ENCODE measurements at regions of chr21 and their contacts with region 1.

Region 1: DNA sequence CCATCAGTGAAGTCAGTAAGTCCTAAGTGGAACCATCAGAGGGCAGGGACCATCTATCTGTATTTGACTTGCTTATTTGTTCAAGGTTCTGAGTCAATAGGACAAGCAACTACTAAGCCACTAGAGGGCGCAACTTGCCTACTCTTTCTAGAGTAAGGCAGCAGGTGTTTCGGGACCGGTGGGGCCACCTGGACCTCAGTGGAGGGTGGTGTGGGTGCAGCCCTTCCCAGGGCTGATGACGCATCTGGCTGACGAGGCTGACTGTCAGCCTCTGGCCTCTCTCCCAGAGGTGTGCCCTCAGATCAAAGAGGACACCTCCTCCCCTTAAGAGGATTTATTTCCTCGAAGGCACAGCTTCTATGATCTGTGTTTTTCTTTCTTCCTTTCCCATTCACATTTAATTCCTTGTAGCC is 6.6 kb downstream of the CBR3 start:
- DNase-seq: peak; percentile 95
- H3K4me3 Mint-ChIP-seq: no peak overlapping the region
- H3K27ac Mint-ChIP-seq: peak overlapping the region; percentile 0
- H3K4me1 Mint-ChIP-seq: peaks cover 20% of the 10 kb centered on the region
- H3K27me3 Mint-ChIP-seq: no peaks in the 10 kb centered on the region

Region 2: DNA sequence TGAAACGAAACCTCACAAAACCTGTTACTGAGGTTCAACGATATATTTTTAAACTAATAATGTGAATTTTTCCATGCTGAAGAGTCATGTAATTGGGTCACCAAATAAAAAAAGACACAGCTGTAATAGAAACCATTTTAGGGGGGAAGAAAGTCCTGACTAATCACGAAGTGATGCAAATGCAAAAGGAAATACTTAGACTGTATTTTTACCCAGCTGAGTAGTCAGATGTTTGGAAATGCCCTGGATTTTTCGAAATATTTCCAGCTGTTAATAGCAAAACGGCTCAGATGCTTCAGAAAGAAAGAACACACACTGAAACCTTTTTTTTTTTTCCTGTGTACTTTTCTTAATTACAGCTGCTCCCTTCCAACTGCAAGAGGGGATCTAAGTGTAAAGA is 291.5 kb before region 1 on chr21:
- CTCF ChIA-PET with region 1: no interaction called
- intact Hi-C with region 1: no loop called
- DNase-seq: no peak
- H3K4me3 Mint-ChIP-seq: no peak overlapping the region
- H3K27ac Mint-ChIP-seq: no peak overlapping the region
- H3K4me1 Mint-ChIP-seq: no peaks in the 10 kb centered on the region
- H3K27me3 Mint-ChIP-seq: peaks cover 5% of the 10 kb centered on the region

Region 3: GRCh38 chr21:35909456-35910223 is 231.9 kb before region 1 on chr21:
- CTCF ChIA-PET with region 1: no interaction called
- intact Hi-C with region 1: no loop called
- DNase-seq: no peak
- H3K4me3 Mint-ChIP-seq: no peak overlapping the region
- H3K27ac Mint-ChIP-seq: no peak overlapping the region
- H3K4me1 Mint-ChIP-seq: no peaks in the 10 kb centered on the region
- H3K27me3 Mint-ChIP-seq: peaks cover 3% of the 10 kb centered on the region

Region 4: DNA sequence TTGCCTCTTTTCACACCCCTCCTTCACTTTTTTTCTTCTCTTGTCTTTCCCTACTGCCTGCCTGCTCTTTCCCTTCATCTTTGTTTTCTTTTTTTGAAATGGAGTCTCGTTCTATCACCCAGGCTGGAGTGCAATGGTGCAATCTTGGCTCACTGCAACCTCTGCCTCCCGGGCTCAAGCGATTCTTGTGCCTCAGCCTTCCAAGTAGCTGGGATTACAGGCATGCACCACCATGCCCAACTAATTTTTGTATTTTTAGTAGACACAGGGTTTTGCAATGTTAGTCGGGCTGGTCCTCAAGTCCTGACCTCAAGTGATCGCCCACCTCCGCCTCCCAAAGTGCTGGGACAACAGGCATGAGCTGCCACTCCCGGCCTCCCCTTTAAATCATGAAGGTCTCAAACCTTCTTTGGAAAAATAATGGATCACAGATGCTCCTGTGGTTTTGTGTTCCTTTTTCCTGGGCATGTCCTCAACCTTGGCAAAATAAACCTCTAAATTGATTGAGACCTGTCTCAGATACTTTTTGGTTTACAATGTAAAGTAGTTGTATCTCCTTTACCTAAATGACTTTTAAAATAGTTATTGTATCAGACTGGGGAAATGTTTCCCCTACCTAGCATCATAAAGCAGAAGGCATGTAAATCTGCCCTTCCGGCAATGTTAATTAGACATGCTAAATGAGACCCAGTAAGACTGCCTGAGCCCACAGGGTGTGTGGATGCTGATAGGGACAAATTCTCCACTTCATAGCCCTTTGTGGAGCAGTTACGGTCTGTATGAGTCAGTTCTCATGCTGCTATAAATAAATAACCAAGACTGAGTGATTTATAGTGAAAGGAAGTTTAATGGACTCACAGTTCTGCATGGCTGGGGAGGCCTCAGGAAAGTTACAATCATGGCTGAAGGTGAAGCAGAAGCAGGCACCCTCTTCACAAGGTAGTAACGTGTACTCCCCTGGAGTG is 44.0 kb before region 1 on chr21:
- CTCF ChIA-PET with region 1: no interaction called
- intact Hi-C with region 1: no loop called
- DNase-seq: no peak
- H3K4me3 Mint-ChIP-seq: no peak overlapping the region
- H3K27ac Mint-ChIP-seq: no peak overlapping the region
- H3K4me1 Mint-ChIP-seq: peaks cover 3% of the 10 kb centered on the region
- H3K27me3 Mint-ChIP-seq: peaks cover 3% of the 10 kb centered on the region

Region 5: DNA sequence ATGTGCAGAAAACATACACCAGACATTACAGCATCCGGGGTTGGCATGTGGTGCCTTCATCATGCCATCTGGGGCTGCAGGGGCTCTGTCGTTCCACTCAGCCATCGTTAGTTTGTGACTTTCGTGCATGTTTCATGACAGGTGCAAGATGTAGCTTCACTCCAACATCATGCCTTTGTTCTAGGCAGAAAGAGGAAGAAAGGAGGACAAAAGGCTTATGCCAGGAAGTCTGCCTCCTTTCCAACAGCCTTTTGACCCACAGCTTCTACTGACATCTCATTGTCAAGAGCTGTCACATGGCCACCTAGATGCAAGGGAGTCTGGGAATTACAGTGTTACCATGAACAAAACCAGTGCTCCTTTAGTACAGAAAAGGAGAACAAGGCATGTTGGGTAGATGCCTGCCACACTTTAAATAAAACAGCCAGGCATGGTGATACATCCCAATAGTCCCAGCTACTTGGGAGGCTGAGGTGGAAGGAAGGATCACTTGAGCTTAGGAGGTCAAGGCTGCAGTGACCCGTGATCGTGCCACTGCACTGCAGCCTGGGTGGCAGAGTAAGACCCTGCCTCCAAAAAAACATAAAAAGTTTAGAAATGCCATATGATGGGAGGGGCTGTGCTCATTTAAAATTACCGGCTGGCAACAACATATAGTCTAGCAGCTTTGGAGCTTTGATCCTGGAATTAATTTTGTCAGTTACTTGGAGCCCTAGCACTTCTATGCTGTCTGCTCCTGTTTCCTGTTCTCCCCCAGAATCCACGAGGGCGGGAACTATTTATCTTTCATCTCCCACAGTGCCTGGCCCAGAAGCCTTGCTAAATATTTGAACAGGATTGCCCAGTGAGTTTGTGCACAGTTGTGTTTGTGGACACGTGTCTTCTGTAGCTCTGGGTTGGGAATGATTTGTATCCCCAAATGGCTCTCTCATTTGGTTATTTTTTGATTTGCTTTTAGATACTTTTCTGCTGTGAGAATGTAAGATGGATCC is 22.5 kb after region 1 on chr21:
- CTCF ChIA-PET with region 1: interaction called, 10 read pairs
- intact Hi-C with region 1: no loop called
- DNase-seq: no peak
- H3K4me3 Mint-ChIP-seq: no peak overlapping the region
- H3K27ac Mint-ChIP-seq: no peak overlapping the region
- H3K4me1 Mint-ChIP-seq: peaks cover 6% of the 10 kb centered on the region
- H3K27me3 Mint-ChIP-seq: no peaks in the 10 kb centered on the region

Region 6: GRCh38 chr21:36330904-36331303 is 189.4 kb after region 1 on chr21:
- CTCF ChIA-PET with region 1: interaction called, 25 read pairs
- intact Hi-C with region 1: loop called (anchors 1 kb)
- DNase-seq: peak; percentile 71
- H3K4me3 Mint-ChIP-seq: no peak overlapping the region
- H3K27ac Mint-ChIP-seq: peak overlapping the region; percentile 77
- H3K4me1 Mint-ChIP-seq: peaks cover 54% of the 10 kb centered on the region
- H3K27me3 Mint-ChIP-seq: no peaks in the 10 kb centered on the region

Region 7: GRCh38 chr21:36504067-36505058 is 362.8 kb after region 1 on chr21:
- CTCF ChIA-PET with region 1: no interaction called
- intact Hi-C with region 1: loop called (anchors 1 kb)
- DNase-seq: peak; percentile 63
- H3K4me3 Mint-ChIP-seq: no peak overlapping the region
- H3K27ac Mint-ChIP-seq: no peak overlapping the region
- H3K4me1 Mint-ChIP-seq: no peaks in the 10 kb centered on the region
- H3K27me3 Mint-ChIP-seq: no peaks in the 10 kb centered on the region

Region 8: GRCh38 chr21:36927719-36928117 is 786.2 kb after region 1 on chr21:
- CTCF ChIA-PET with region 1: no interaction called
- intact Hi-C with region 1: loop called (anchors 2 kb)
- DNase-seq: peak; percentile 87
- H3K4me3 Mint-ChIP-seq: no peak overlapping the region
- H3K27ac Mint-ChIP-seq: no peak overlapping the region
- H3K4me1 Mint-ChIP-seq: peaks cover 8% of the 10 kb centered on the region
- H3K27me3 Mint-ChIP-seq: no peaks in the 10 kb centered on the region